BJ (cell line): ENCODE measurements at regions of chr9 and their contacts with region 1.

Region 1: DNA sequence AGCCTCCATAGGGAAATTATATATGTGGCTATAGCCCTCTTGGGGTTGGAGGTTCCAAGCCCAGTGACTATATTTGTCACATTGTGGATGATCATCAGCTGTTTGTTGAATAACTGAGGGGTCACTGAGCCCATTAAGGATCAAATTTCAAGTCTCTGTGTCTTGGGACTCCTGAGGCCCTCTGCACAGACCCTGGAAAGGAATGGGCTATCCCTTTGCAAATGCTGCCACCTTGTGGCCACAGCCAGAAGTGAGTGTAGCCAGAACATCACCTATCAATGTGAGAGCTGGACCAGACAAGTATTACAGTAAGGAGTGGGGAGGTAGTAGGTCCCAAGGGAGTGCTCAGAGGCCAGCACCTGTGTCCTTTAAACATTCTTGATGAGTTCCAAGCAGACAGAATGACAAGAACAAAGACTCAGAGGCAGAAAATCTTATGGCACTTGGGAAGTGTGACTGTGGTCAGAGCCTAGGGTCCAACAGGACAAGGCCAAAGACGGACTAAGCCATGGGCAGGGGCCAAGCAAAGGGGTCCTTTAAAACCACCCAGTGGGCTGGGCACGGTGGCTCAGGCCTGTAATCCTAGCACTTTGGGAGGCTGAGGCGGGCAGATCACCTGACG is 8.2 kb downstream of the RPP25L start:
- DNase-seq: no peak
- H3K4me3 ChIP-seq: no peak overlapping the region
- H3K27me3 ChIP-seq: peaks cover 4% of the 10 kb centered on the region
- CTCF ChIP-seq: peak; percentile 88

Region 2: GRCh38 chr9:34126207-34127034 is 477.3 kb before region 1 on chr9 and contains the start of gene DCAF12:
- CTCF ChIA-PET with region 1: no interaction called
- POLR2A ChIA-PET with region 1: no interaction called
- DNase-seq: peak; percentile 46
- H3K4me3 ChIP-seq: peak within 1 kb of the TSS; percentile 63
- H3K27me3 ChIP-seq: no peaks in the 10 kb centered on the region
- CTCF ChIP-seq: peak; percentile 21; the same call in 1 of the 2 replicates
- polyA plus RNA-seq, gene DCAF12: 29.4 and 37.0 TPM in 2 replicates

Region 3: DNA sequence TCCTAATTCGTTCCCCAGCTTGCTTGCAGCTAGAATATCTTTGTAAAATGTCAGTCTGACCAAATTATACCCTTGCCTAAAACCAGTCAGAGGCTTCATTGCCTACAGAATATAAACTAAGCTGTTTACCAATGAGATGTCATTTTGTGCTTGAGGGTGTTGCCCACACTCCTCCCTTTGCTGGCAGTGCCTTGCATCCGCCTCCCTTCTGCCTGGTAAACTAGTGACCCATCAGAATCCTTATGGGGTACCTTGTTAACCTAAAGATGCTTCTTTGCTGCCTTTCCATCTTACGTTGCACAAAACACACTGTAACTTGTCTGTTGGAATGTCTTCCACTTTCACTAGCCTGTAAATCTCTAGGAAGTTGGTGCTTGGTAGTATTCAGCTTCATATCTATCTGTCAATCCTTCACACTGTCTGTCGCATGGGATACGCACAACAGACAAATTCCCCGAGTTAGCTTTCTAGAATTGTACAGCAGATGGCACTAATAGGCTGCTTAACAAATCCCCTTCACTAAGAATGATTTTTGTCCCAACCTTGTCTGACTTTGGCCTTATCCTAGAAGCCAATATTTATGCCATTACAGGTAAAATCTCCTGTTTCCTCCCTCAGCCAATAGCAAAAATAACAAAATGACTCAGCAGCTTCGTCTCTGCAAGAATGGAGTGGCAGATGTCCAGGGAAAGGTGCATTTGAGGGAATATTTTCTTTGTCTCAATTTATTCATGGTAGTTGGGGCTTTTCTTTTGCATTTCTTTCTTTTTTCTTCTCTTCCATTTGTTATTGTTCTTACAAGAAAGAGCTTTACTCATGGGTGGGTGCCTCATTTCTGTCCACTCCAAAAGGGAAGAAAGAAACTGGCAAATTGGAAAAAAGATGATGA is 271.4 kb before region 1 on chr9:
- CTCF ChIA-PET with region 1: interaction called, 11 read pairs
- POLR2A ChIA-PET with region 1: no interaction called
- DNase-seq: no peak
- H3K4me3 ChIP-seq: no peak overlapping the region
- H3K27me3 ChIP-seq: no peaks in the 10 kb centered on the region
- CTCF ChIP-seq: peak; percentile 52

Region 4: DNA sequence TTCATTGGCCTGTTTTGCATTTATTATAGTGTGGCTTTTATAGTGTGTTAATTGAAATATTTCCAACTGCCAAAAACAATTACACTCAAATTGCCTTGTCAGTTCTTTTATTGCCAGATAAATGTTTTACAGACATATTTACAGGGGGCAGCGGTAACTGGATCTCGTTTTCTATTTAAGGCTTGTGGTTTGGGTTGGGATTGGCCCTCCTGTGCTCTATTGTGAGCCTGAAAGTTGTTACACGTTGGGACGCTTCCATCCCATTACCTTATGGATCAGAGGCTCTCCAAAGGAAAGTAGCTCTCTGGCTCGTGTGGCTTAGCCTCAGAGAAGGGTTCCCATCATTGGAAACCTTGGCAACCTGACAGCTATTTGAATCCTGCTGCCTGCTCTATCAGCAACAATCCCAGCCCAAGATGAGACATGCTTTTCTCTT is 124.3 kb before region 1 on chr9:
- CTCF ChIA-PET with region 1: no interaction called
- POLR2A ChIA-PET with region 1: no interaction called
- DNase-seq: no peak
- H3K4me3 ChIP-seq: no peak overlapping the region
- H3K27me3 ChIP-seq: peaks cover 12% of the 10 kb centered on the region
- CTCF ChIP-seq: no peak

Region 5: GRCh38 chr9:34620061-34620994 is 16.6 kb after region 1 on chr9 and contains the start of gene DCTN3:
- CTCF ChIA-PET with region 1: interaction called, 16 read pairs
- POLR2A ChIA-PET with region 1: no interaction called
- DNase-seq: peak; percentile 74
- H3K4me3 ChIP-seq: peak within 1 kb of the TSS; percentile 96
- H3K27me3 ChIP-seq: peaks cover 21% of the 10 kb centered on the region
- CTCF ChIP-seq: no peak
- polyA plus RNA-seq, gene DCTN3: 74.7 and 149 TPM in 2 replicates